Activated naive CD4-positive, alpha-beta T cell treated with anti-CD3 and anti-CD28 coated beads for 36 hours (primary cell): ENCODE measurements at regions of chr5 and their contacts with region 1.

Region 1: DNA sequence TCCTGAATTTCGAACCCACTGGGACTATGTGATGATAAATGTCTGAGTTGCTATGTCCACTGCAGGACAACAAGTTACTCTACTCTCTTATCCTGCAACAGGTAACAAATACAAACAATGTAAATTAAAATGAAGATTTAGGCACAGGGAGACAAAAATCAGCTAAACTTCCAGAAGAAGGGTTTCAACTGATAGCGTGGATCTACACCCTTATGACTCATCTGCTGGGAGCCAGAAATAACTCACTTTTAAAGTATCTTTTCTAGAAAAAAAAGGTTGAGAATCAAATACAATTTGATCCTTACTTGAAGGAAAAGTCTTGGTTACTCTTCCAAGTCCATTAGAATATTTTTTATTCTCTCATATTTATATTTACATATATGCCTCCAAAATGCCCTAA is 21.4 kb downstream of the PJA2 start:
- DNase-seq: no peak
- H3K4me3 Mint-ChIP-seq: no peak overlapping the region
- H3K27ac Mint-ChIP-seq: no peak overlapping the region
- H3K4me1 Mint-ChIP-seq: peaks cover 67% of the 10 kb centered on the region
- H3K27me3 Mint-ChIP-seq: no peaks in the 10 kb centered on the region

Region 2: GRCh38 chr5:109347252-109347888 is 41.0 kb before region 1 on chr5:
- CTCF ChIA-PET with region 1: no interaction called
- intact Hi-C with region 1: no loop called
- DNase-seq: no peak
- H3K4me3 Mint-ChIP-seq: no peak overlapping the region
- H3K27ac Mint-ChIP-seq: peak overlapping the region; percentile 30
- H3K4me1 Mint-ChIP-seq: peaks cover 20% of the 10 kb centered on the region
- H3K27me3 Mint-ChIP-seq: no peaks in the 10 kb centered on the region

Region 3: GRCh38 chr5:109374625-109375024 is 13.8 kb before region 1 on chr5:
- CTCF ChIA-PET with region 1: no interaction called
- intact Hi-C with region 1: loop called (anchors 2 kb)
- DNase-seq: no peak
- H3K4me3 Mint-ChIP-seq: no peak overlapping the region
- H3K27ac Mint-ChIP-seq: no peak overlapping the region
- H3K4me1 Mint-ChIP-seq: peaks cover 49% of the 10 kb centered on the region
- H3K27me3 Mint-ChIP-seq: no peaks in the 10 kb centered on the region

Region 4: GRCh38 chr5:109404428-109404960 is 16.1 kb after region 1 on chr5:
- CTCF ChIA-PET with region 1: no interaction called
- intact Hi-C with region 1: loop called (anchors 2 kb)
- DNase-seq: no peak
- H3K4me3 Mint-ChIP-seq: no peak overlapping the region
- H3K27ac Mint-ChIP-seq: no peak overlapping the region
- H3K4me1 Mint-ChIP-seq: peaks cover 67% of the 10 kb centered on the region
- H3K27me3 Mint-ChIP-seq: no peaks in the 10 kb centered on the region